CD4-positive, alpha-beta memory T cell (primary cell): ENCODE measurements at regions of chr5 and their contacts with region 1.

Region 1: DNA sequence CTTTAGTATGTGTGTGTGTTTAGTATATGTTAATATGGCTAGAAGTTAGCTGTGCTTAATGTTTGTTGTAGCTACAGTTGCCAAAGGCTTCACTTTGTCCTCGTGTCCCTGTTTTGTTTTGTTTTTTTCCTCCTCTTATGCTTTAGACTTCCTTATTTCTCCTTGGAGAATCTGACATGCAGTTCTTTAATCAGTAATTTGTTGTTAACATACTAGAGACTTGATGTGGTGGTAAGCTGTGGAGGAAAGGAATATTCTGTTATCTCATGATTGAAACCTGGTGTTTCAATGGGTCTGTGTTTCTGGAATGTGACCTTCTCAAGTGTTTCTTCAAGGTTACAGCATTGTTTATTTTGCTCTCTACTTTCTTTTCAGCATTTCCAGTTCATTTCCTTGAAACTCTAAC is 515.6 kb upstream of the ST8SIA4 start:
- DNase-seq: no peak
- H3K4me3 ChIP-seq: no peak overlapping the region
- H3K4me3 Mint-ChIP-seq: no peak overlapping the region
- H3K27ac ChIP-seq: no peak overlapping the region
- H3K27ac Mint-ChIP-seq: no peak overlapping the region
- H3K4me1 ChIP-seq: no peaks in the 10 kb centered on the region
- H3K4me1 Mint-ChIP-seq: no peaks in the 10 kb centered on the region
- H3K27me3 ChIP-seq: no peaks in the 10 kb centered on the region
- H3K27me3 Mint-ChIP-seq: peaks cover 0 to 3% of the 10 kb centered on the region in 2 donors

Region 2: GRCh38 chr5:101346906-101347305 is 71.8 kb before region 1 on chr5:
- CTCF ChIA-PET with region 1: no interaction called
- POLR2A ChIA-PET with region 1: no interaction called
- intact Hi-C with region 1: loop called (anchors 2 kb)
- DNase-seq: no peak
- H3K4me3 ChIP-seq: no peak overlapping the region
- H3K4me3 Mint-ChIP-seq: no peak overlapping the region
- H3K27ac ChIP-seq: no peak overlapping the region
- H3K27ac Mint-ChIP-seq: no peak overlapping the region
- H3K4me1 ChIP-seq: no peaks in the 10 kb centered on the region
- H3K4me1 Mint-ChIP-seq: no peaks in the 10 kb centered on the region
- H3K27me3 ChIP-seq: no peaks in the 10 kb centered on the region
- H3K27me3 Mint-ChIP-seq: peaks cover 0 to 4% of the 10 kb centered on the region in 2 donors